ENCODE measurements at regions of chr10 and their contacts with region 1.

Region 1: GRCh38 chr10:76336213-76336963 is 905.0 kb downstream of the LRMDA start:
- DNase-seq: no peak
- H3K4me3 ChIP-seq: no peak overlapping the region
- H3K27ac ChIP-seq: no peak overlapping the region
- H3K4me1 ChIP-seq: peaks cover 2% of the 10 kb centered on the region; the same call in 1 of the 2 replicates
- H3K27me3 ChIP-seq: no peaks in the 10 kb centered on the region
- CTCF ChIP-seq: no peak

Region 2: GRCh38 chr10:75922435-75922834 is 414.0 kb before region 1 on chr10:
- CTCF ChIA-PET with region 1: no interaction called
- POLR2A ChIA-PET with region 1: no interaction called
- intact Hi-C with region 1: no loop called
- DNase-seq: no peak
- H3K4me3 ChIP-seq: no peak overlapping the region
- H3K27ac ChIP-seq: no peak overlapping the region
- H3K4me1 ChIP-seq: no peaks in the 10 kb centered on the region
- H3K27me3 ChIP-seq: no peaks in the 10 kb centered on the region
- CTCF ChIP-seq: peak; percentile 43

Region 3: GRCh38 chr10:76231286-76231934 is 105.0 kb before region 1 on chr10:
- CTCF ChIA-PET with region 1: no interaction called
- POLR2A ChIA-PET with region 1: no interaction called
- intact Hi-C with region 1: no loop called
- DNase-seq: no peak
- H3K4me3 ChIP-seq: no peak overlapping the region
- H3K27ac ChIP-seq: no peak overlapping the region
- H3K4me1 ChIP-seq: no peaks in the 10 kb centered on the region
- H3K27me3 ChIP-seq: no peaks in the 10 kb centered on the region
- CTCF ChIP-seq: no peak

Region 4: GRCh38 chr10:76352300-76352699 is 15.9 kb after region 1 on chr10:
- CTCF ChIA-PET with region 1: no interaction called
- POLR2A ChIA-PET with region 1: interaction called, 11 read pairs
- intact Hi-C with region 1: no loop called
- DNase-seq: peak; percentile 30 to 72
- H3K4me3 ChIP-seq: no peak overlapping the region
- H3K27ac ChIP-seq: 0 out of 2 replicates have a peak overlapping the region, but pooled peaks have one; percentile 20
- H3K4me1 ChIP-seq: peaks cover 7% of the 10 kb centered on the region; the same call in 1 of the 2 replicates
- H3K27me3 ChIP-seq: no peaks in the 10 kb centered on the region
- CTCF ChIP-seq: no peak

Region 5: DNA sequence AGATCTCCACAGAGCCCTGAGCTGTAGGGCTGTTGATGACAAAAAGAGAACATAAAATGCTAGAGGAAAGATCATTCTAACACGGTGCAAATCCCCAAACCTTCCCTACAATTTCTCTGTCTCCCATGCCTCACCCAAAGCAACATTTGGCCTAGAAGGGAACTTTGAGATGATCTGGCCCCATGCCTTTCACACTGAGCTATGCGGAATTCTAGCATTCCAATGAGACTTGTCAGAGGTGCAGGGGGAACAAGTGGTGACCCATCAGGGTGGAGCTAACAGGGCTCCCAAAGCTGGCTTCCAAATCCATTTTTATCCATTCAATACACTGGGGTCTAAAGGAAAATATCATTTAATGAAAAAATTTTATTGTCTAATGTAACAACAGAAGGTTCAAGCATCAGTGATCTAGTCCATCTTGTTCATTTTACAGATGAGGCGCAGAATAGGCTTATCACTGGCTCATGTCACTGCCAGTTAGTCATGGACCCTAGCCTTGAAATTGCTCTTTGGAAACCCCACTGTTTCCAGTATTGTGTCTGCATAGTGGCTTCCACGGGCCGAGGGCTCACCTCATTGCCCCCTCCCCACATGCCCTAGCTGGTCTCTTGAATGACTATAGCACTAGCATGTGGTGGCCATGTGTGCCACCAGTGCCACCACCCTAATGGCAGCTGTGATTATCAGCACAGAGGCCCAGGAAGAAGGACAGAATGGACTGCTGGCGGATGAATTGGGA is 96.1 kb after region 1 on chr10:
- CTCF ChIA-PET with region 1: no interaction called
- POLR2A ChIA-PET with region 1: no interaction called
- intact Hi-C with region 1: loop called (anchors 10 kb)
- DNase-seq: peak; percentile 60 to 79
- H3K4me3 ChIP-seq: peak overlapping the region; percentile 30; the same call in 1 of the 2 replicates
- H3K27ac ChIP-seq: peak overlapping the region; percentile 80
- H3K4me1 ChIP-seq: peaks cover 40% of the 10 kb centered on the region
- H3K27me3 ChIP-seq: no peaks in the 10 kb centered on the region
- CTCF ChIP-seq: no peak